Naive thymus-derived CD4-positive, alpha-beta T cell (primary cell): ENCODE measurements at regions of chr11 and their contacts with region 1.

Region 1: GRCh38 chr11:67317205-67317887 is 14.0 kb downstream of the SSH3 start:
- DNase-seq: peak; percentile 95 to 98 (median 97)
- ATAC-seq: peak; percentile 93
- H3K4me3 ChIP-seq: peak overlapping the region; percentile 64
- H3K4me3 Mint-ChIP-seq: peak overlapping the region; percentile 89 to 99 (median 98)
- H3K27ac ChIP-seq: peak overlapping the region; percentile 73
- H3K27ac Mint-ChIP-seq: peak overlapping the region; percentile 88 to 99 (median 95)
- H3K4me1 ChIP-seq: peaks cover 15 to 23% of the 10 kb centered on the region in 2 donors
- H3K4me1 Mint-ChIP-seq: peaks cover 25 to 48% (median 39%) of the 10 kb centered on the region in 7 donors
- H3K27me3 ChIP-seq: no peaks in the 10 kb centered on the region
- H3K27me3 Mint-ChIP-seq: peaks cover 0 to 13% (median 0%) of the 10 kb centered on the region in 5 donors

Region 2: DNA sequence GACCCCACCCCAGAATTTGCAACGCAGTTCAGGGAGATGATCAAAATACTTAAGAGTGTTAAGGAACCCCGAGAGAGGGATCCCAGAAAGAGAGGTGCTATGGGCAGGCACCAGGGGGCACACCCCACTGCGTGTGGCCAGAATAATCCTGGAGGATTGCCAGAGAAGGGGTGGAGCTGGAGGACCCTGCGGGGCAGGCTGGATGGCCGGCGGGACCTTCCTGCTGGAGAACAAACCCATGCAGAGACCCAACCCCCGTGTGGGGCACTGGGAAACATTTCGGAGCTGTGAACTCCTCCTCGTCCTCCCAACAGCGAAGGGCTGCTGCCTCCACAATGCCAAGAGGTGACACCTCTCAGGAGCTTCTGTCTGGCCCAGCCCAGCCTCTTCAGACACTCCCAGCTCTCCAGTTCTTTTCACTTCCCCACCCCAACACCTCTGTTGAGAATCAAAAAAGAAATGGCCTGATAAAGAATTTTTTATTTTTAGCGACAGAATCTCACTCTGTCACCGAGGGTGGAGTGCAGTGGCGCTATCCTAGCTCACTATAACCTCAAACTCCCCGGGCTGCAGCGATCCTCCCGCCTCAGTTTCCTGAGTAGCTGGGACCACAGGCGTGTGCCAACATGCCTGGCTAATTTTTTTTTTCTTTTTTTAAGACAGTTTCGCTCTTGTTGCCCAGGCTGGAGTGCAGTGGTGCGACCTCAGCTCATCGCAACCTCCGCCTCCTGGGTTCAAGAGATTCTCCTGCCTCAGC is 235.1 kb before region 1 on chr11:
- CTCF ChIA-PET with region 1: interaction called, 3 read pairs
- POLR2A ChIA-PET with region 1: no interaction called
- intact Hi-C with region 1: loop called (anchors 1 to 2 kb)
- DNase-seq: peak in 3 of 9 donors; percentile 5 to 13 (median 11)
- ATAC-seq: no peak
- H3K4me3 ChIP-seq: no peak overlapping the region
- H3K4me3 Mint-ChIP-seq: peak overlapping the region; percentile 12 to 70 (median 60)
- H3K27ac ChIP-seq: no peak overlapping the region
- H3K27ac Mint-ChIP-seq: peak overlapping the region in 3 of 9 donors; percentile 15 to 72 (median 17)
- H3K4me1 ChIP-seq: peaks cover 7 to 10% of the 10 kb centered on the region in 2 donors
- H3K4me1 Mint-ChIP-seq: peaks cover 5 to 22% (median 15%) of the 10 kb centered on the region in 7 donors
- H3K27me3 ChIP-seq: no peaks in the 10 kb centered on the region
- H3K27me3 Mint-ChIP-seq: peaks cover 0 to 5% (median 0%) of the 10 kb centered on the region in 5 donors

Region 3: DNA sequence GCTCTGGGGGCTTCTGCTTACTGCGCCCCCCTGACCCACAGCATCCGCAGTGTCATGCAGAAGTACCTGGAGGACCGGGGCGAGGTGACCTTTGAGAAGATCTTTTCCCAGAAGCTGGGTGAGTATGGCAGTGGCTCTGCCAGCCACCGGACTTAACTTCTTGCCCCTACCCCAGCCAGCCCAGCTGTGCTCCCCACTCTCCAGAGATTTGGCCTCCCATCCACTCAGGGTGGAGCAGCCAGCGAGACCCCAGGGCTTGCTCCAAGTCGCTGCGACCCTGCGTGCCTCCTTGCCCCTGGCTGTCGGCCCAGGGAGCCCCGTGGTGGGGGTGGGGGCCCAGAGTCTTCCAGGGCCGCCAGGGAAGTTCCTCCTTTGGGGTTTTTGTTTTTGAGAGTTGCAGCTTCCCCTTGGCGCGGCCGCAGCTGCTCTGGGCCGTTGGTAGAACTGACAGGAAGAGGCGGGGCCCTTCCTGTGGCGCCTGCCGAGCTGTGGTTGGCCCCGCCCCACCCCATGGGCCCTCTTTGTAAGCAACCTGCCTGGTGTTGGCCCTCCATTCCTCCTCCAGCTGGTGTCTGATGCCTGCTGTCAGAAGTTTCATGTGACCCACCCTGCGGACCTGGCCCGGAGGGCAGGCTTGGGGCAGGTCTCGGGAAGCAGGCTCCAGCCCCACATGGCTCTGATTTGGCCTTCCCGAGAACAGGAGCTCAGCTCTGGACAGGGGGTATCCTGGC is 40.0 kb before region 1 on chr11:
- CTCF ChIA-PET with region 1: interaction called, 6 read pairs
- POLR2A ChIA-PET with region 1: interaction called, 22 read pairs
- intact Hi-C with region 1: loop called (anchors 1 to 2 kb)
- DNase-seq: peak; percentile 79 to 94 (median 93)
- ATAC-seq: peak; percentile 97
- H3K4me3 ChIP-seq: peak overlapping the region; percentile 90
- H3K4me3 Mint-ChIP-seq: peak overlapping the region; percentile 62 to 99 (median 88)
- H3K27ac ChIP-seq: peak overlapping the region; percentile 93
- H3K27ac Mint-ChIP-seq: peak overlapping the region; percentile 87 to 100 (median 97)
- H3K4me1 ChIP-seq: peaks cover 79 to 87% of the 10 kb centered on the region in 2 donors
- H3K4me1 Mint-ChIP-seq: peaks cover 47 to 83% (median 66%) of the 10 kb centered on the region in 7 donors
- H3K27me3 ChIP-seq: no peaks in the 10 kb centered on the region
- H3K27me3 Mint-ChIP-seq: no peaks in the 10 kb centered on the region

Region 4: GRCh38 chr11:67288452-67289225 is 28.7 kb before region 1 on chr11:
- CTCF ChIA-PET with region 1: interaction called, 7 read pairs
- POLR2A ChIA-PET with region 1: interaction called, 33 read pairs
- intact Hi-C with region 1: loop called (anchors 1 kb)
- DNase-seq: peak; percentile 84 to 94 (median 91)
- ATAC-seq: peak; percentile 82
- H3K4me3 ChIP-seq: peak overlapping the region; percentile 95
- H3K4me3 Mint-ChIP-seq: peak overlapping the region; percentile 76 to 98 (median 85)
- H3K27ac ChIP-seq: peak overlapping the region; percentile 81
- H3K27ac Mint-ChIP-seq: peak overlapping the region; percentile 95 to 99 (median 97)
- H3K4me1 ChIP-seq: peaks cover 54 to 60% of the 10 kb centered on the region in 2 donors
- H3K4me1 Mint-ChIP-seq: peaks cover 29 to 73% (median 57%) of the 10 kb centered on the region in 7 donors
- H3K27me3 ChIP-seq: no peaks in the 10 kb centered on the region
- H3K27me3 Mint-ChIP-seq: peaks cover 0 to 2% (median 0%) of the 10 kb centered on the region in 5 donors

Region 5: DNA sequence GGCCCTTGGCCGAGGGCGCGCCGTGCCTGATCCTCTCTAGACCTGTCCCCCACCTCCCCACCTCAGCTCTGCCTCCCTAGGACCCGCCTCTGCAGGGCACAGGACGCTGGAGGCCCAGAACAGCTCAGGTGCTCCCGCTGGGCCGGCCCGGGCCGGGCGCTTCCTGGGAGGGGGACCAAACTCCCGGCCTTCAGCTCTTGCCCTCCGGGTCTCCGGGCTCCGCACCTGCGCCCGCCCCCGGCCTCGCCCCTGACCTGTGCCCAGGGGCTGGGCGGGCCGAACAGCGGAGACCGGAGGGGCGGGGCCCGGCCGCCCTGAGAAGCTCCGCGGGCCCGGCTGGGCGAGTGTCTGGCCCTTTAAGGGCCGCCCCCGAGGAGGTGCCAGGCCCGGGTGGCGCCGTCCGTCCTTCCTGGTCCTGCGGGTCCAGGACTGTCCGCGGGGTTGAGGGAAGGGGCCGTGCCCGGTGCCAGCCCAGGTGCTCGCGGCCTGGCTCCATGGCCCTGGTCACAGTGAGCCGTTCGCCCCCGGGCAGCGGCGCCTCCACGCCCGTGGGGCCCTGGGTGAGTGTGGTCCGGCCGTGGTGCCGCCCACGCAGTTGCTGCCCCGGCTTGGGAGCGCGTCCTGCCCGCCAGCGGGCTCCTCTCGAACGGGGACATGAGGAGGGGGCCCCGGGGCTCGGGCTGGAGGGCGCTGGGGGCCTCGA is 14.1 kb before region 1 on chr11 and contains the start of gene SSH3:
- CTCF ChIA-PET with region 1: interaction called, 5 read pairs
- POLR2A ChIA-PET with region 1: interaction called, 9 read pairs
- intact Hi-C with region 1: loop called in 1 of 2 experiments (anchors 1 kb)
- DNase-seq: peak in 6 of 9 donors; percentile 17 to 63 (median 24)
- ATAC-seq: peak; percentile 80
- H3K4me3 ChIP-seq: peak within 1 kb of the TSS; percentile 61
- H3K4me3 Mint-ChIP-seq: peak within 1 kb of the TSS; percentile 25 to 79 (median 68)
- H3K27ac ChIP-seq: peak within 1 kb of the TSS; percentile 76
- H3K27ac Mint-ChIP-seq: peak within 1 kb of the TSS in 6 of 9 donors; percentile 17 to 74 (median 55)
- H3K4me1 ChIP-seq: peaks cover 6 to 9% of the 10 kb centered on the region in 2 donors
- H3K4me1 Mint-ChIP-seq: peaks cover 0 to 18% (median 11%) of the 10 kb centered on the region in 7 donors
- H3K27me3 ChIP-seq: no peaks in the 10 kb centered on the region
- H3K27me3 Mint-ChIP-seq: no peaks in the 10 kb centered on the region
- total RNA-seq, gene SSH3: 8.8 to 23.8 (median 15.0) TPM

Region 6: GRCh38 chr11:67345920-67346799 is 28.8 kb after region 1 on chr11:
- CTCF ChIA-PET with region 1: interaction called, 34 read pairs
- POLR2A ChIA-PET with region 1: interaction called, 10 read pairs
- intact Hi-C with region 1: loop called in 1 of 2 experiments (anchors 2 kb)
- DNase-seq: peak in 5 of 9 donors; percentile 34 to 62 (median 52)
- ATAC-seq: peak; percentile 76
- H3K4me3 ChIP-seq: no peak overlapping the region
- H3K4me3 Mint-ChIP-seq: peak overlapping the region; percentile 30 to 74 (median 56)
- H3K27ac ChIP-seq: peak overlapping the region; percentile 68
- H3K27ac Mint-ChIP-seq: peak overlapping the region; percentile 61 to 98 (median 92)
- H3K4me1 ChIP-seq: peaks cover 5 to 38% of the 10 kb centered on the region in 2 donors
- H3K4me1 Mint-ChIP-seq: peaks cover 27 to 70% (median 60%) of the 10 kb centered on the region in 7 donors
- H3K27me3 ChIP-seq: no peaks in the 10 kb centered on the region
- H3K27me3 Mint-ChIP-seq: no peaks in the 10 kb centered on the region

Region 7: GRCh38 chr11:67382276-67383136 is 65.2 kb after region 1 on chr11:
- CTCF ChIA-PET with region 1: interaction called, 10 read pairs
- POLR2A ChIA-PET with region 1: interaction called, 3 read pairs
- intact Hi-C with region 1: loop called in 1 of 2 experiments (anchors 1 kb)
- DNase-seq: peak; percentile 67 to 86 (median 79)
- ATAC-seq: peak; percentile 96
- H3K4me3 ChIP-seq: no peak overlapping the region
- H3K4me3 Mint-ChIP-seq: no peak overlapping the region
- H3K27ac ChIP-seq: no peak overlapping the region
- H3K27ac Mint-ChIP-seq: peak overlapping the region in 2 of 9 donors; percentile 1 to 79
- H3K4me1 ChIP-seq: peaks cover 0 to 5% of the 10 kb centered on the region in 2 donors
- H3K4me1 Mint-ChIP-seq: peaks cover 4 to 20% (median 8%) of the 10 kb centered on the region in 7 donors
- H3K27me3 ChIP-seq: no peaks in the 10 kb centered on the region
- H3K27me3 Mint-ChIP-seq: peaks cover 0 to 38% (median 0%) of the 10 kb centered on the region in 5 donors

Region 8: GRCh38 chr11:67583247-67584204 is 266.2 kb after region 1 on chr11 and contains the start of gene GSTP1:
- CTCF ChIA-PET with region 1: no interaction called
- POLR2A ChIA-PET with region 1: no interaction called
- intact Hi-C with region 1: no loop called
- DNase-seq: peak; percentile 51 to 86 (median 62)
- ATAC-seq: peak; percentile 86
- H3K4me3 ChIP-seq: peak within 1 kb of the TSS; percentile 69
- H3K4me3 Mint-ChIP-seq: peak within 1 kb of the TSS; percentile 79 to 98 (median 92)
- H3K27ac ChIP-seq: peak within 1 kb of the TSS; percentile 77
- H3K27ac Mint-ChIP-seq: peak within 1 kb of the TSS; percentile 78 to 93 (median 90)
- H3K4me1 ChIP-seq: peaks cover 9 to 18% of the 10 kb centered on the region in 2 donors
- H3K4me1 Mint-ChIP-seq: peaks cover 37 to 55% (median 44%) of the 10 kb centered on the region in 7 donors
- H3K27me3 ChIP-seq: no peaks in the 10 kb centered on the region
- H3K27me3 Mint-ChIP-seq: peaks cover 0 to 27% (median 0%) of the 10 kb centered on the region in 5 donors
- total RNA-seq, gene GSTP1: 77.2 to 265 (median 139) TPM